ENCODE measurements at regions of chr13 and their contacts with region 1.

Region 1: DNA sequence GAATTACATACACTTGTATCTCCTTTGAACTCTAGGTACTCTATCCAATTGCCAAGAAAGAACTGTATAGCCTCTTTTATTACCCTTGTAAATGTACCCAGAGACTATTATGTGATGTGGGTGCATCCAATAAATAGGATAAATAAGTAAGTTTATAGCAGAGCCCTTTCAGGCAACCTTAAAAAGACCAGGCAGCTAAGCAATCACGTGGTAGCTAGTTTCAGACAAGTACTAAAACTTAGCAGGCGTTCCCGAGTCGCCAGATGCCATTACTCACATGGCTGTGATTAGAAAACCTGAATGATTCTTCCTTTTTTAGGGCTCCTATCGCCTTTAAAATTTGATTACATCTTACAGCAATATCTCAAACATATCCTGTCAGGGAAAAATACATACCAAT is 1303.0 kb downstream of the EFNB2 start:
- DNase-seq: no peak
- ATAC-seq: no peak
- H3K4me3 ChIP-seq: no peak overlapping the region
- H3K27ac ChIP-seq: no peak overlapping the region
- H3K4me1 ChIP-seq: no peaks in the 10 kb centered on the region
- H3K27me3 ChIP-seq: no peaks in the 10 kb centered on the region
- CTCF ChIP-seq: no peak
- EP300 ChIP-seq: no peak
- POLR2A ChIP-seq: no peak
- RAD21 ChIP-seq: no peak

Region 2: GRCh38 chr13:104854007-104854406 is 378.4 kb before region 1 on chr13:
- CTCF ChIA-PET with region 1: no interaction called
- POLR2A ChIA-PET with region 1: no interaction called
- in situ Hi-C with region 1: no loop called
- intact Hi-C with region 1: no loop called
- DNase-seq: no peak
- ATAC-seq: no peak
- H3K4me3 ChIP-seq: no peak overlapping the region
- H3K27ac ChIP-seq: no peak overlapping the region
- H3K4me1 ChIP-seq: no peaks in the 10 kb centered on the region
- H3K27me3 ChIP-seq: no peaks in the 10 kb centered on the region
- CTCF ChIP-seq: no peak
- EP300 ChIP-seq: no peak
- POLR2A ChIP-seq: no peak
- RAD21 ChIP-seq: no peak

Region 3: GRCh38 chr13:105327581-105328126 is 95.2 kb after region 1 on chr13:
- CTCF ChIA-PET with region 1: no interaction called
- POLR2A ChIA-PET with region 1: no interaction called
- in situ Hi-C with region 1: no loop called
- intact Hi-C with region 1: no loop called
- DNase-seq: no peak
- ATAC-seq: no peak
- H3K4me3 ChIP-seq: no peak overlapping the region
- H3K27ac ChIP-seq: no peak overlapping the region
- H3K4me1 ChIP-seq: no peaks in the 10 kb centered on the region
- H3K27me3 ChIP-seq: no peaks in the 10 kb centered on the region
- CTCF ChIP-seq: no peak
- EP300 ChIP-seq: no peak
- POLR2A ChIP-seq: no peak
- RAD21 ChIP-seq: no peak

Region 4: GRCh38 chr13:105463011-105463501 is 230.6 kb after region 1 on chr13:
- CTCF ChIA-PET with region 1: no interaction called
- POLR2A ChIA-PET with region 1: no interaction called
- in situ Hi-C with region 1: no loop called
- intact Hi-C with region 1: no loop called
- DNase-seq: no peak
- ATAC-seq: no peak
- H3K4me3 ChIP-seq: no peak overlapping the region
- H3K27ac ChIP-seq: no peak overlapping the region
- H3K4me1 ChIP-seq: no peaks in the 10 kb centered on the region
- H3K27me3 ChIP-seq: no peaks in the 10 kb centered on the region
- CTCF ChIP-seq: no peak
- EP300 ChIP-seq: no peak
- POLR2A ChIP-seq: no peak
- RAD21 ChIP-seq: no peak

Region 5: DNA sequence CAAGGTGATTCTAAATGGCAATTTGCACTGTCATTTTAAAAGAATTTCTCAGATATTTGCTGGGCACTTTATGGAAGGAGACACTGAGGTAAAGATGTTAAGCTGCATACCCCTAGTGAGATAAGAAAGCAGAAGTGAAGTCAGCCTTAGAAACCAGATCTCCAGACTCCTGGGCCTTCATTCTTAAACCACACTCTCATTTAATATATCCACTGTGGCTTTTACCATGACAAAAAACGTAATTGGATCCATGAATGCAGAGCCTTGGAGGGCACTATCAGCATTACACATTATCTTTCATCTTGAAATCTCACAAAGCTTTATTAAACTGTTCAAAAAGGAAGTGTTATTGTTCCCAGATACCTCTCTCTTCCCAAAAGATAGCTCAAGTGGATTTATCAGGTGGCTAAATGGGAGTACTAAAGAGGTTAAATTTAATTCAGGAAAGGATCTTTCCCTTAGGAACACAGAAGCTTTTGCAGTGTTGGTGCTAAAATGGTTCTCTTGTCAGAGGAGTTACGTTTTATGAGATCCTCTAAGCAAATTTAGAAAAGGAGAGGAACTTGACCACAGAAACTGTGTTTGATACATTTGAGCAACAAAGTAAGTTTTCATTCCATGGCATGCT is 242.7 kb after region 1 on chr13:
- CTCF ChIA-PET with region 1: no interaction called
- POLR2A ChIA-PET with region 1: no interaction called
- in situ Hi-C with region 1: loop called (anchors 10 kb)
- intact Hi-C with region 1: no loop called
- DNase-seq: no peak
- ATAC-seq: no peak
- H3K4me3 ChIP-seq: no peak overlapping the region
- H3K27ac ChIP-seq: no peak overlapping the region
- H3K4me1 ChIP-seq: no peaks in the 10 kb centered on the region
- H3K27me3 ChIP-seq: no peaks in the 10 kb centered on the region
- CTCF ChIP-seq: no peak
- EP300 ChIP-seq: no peak
- POLR2A ChIP-seq: no peak
- RAD21 ChIP-seq: no peak